ENCODE measurements at regions of chr18 and their contacts with region 1.

Region 1: GRCh38 chr18:50266248-50266704 is at the start of gene CFAP53:
- DNase-seq: peak; percentile 85
- H3K4me3 ChIP-seq: peak within 1 kb of the TSS; percentile 67
- H3K27ac ChIP-seq: no peak within 1 kb of the TSS
- H3K4me1 ChIP-seq: peaks cover 25% of the 10 kb centered on the region
- CTCF ChIP-seq: no peak
- total RNA-seq, gene CFAP53: 0.57 TPM in 1 of 2 replicates, not detected in the other

Region 2: DNA sequence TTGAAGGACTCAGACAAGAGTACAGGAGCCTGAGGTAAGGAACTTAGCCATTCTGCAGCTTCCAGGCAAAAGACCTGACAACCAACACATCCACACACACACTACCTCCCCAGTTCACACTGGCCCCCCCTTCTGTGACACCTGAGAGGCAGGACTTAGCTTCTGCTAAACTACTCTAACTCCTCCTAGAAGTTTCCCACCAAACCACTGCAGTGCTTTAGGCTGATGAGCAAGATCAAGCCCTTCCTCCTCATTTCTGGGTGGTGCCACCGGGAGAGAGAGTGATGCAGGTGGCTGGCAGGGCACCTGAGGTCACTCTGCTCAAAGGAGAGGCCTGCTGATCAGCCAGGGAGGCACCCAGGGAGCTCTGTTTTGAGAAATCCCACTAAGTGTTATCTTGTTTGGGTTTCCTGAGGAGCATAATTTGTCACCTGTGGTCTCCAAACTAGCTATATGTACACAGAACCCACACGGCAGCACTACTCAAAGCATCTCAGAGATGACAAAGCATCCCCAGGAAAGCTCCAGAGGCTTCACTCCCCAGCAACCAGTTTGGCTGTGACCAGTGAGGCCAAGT is 259.7 kb before region 1 on chr18:
- CTCF ChIA-PET with region 1: no interaction called
- POLR2A ChIA-PET with region 1: no interaction called
- intact Hi-C with region 1: no loop called
- DNase-seq: no peak
- H3K4me3 ChIP-seq: no peak overlapping the region
- H3K27ac ChIP-seq: no peak overlapping the region
- H3K4me1 ChIP-seq: no peaks in the 10 kb centered on the region
- CTCF ChIP-seq: no peak

Region 3: GRCh38 chr18:50281295-50281971 is 15.2 kb after region 1 on chr18 and contains the start of gene MBD1:
- CTCF ChIA-PET with region 1: no interaction called
- POLR2A ChIA-PET with region 1: no interaction called
- intact Hi-C with region 1: loop called (anchors 1 kb)
- DNase-seq: peak; percentile 93
- H3K4me3 ChIP-seq: peak within 1 kb of the TSS; percentile 93
- H3K27ac ChIP-seq: peak within 1 kb of the TSS; percentile 69
- H3K4me1 ChIP-seq: peaks cover 24% of the 10 kb centered on the region
- CTCF ChIP-seq: 0 out of 2 replicates have a peak, but pooled peaks have one; percentile 19
- total RNA-seq, gene MBD1: 39.8 and 42.2 TPM in 2 replicates

Region 4: DNA sequence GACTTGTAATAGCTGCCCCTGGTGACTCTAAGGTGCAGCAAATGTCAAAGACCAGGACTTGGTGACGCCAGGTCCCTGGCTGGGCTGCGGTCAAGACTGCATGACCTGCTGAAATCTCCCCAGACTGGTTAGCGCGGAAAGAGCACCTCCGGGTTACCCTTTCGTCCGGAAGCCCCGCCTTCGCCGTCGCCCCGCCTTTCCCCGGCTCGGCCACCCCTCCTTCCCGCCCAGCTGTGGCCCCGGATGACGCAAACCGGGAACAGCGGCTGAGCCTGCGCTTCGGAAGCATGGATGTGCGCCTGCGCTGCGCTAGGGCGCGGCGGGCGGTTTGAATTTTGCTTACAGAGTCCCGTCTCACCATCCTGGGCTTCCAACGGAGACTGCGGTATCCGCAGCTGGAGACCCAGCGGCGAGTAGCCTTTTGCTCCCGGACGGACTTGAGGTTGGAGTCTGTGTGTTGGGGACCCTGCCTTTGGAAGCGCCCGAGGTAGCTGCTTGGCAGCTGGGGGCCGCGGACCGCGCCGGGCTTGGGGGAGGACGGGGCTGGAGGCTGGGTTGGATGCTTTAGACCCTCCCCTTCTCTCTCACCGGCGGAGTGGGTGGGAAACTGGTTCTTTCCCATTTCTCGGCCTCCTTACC is 108.6 kb after region 1 on chr18 and contains the start of gene SKA1:
- CTCF ChIA-PET with region 1: no interaction called
- POLR2A ChIA-PET with region 1: no interaction called
- intact Hi-C with region 1: loop called (anchors 5 kb)
- DNase-seq: peak; percentile 89
- H3K4me3 ChIP-seq: peak within 1 kb of the TSS; percentile 87
- H3K27ac ChIP-seq: peak within 1 kb of the TSS; percentile 43
- H3K4me1 ChIP-seq: peaks cover 17% of the 10 kb centered on the region
- CTCF ChIP-seq: no peak
- total RNA-seq, gene SKA1: 22.2 and 28.8 TPM in 2 replicates

Measured in OCI-LY7 (cell line).